ENCODE measurements at regions of chr4 and their contacts with region 1.

Region 1: DNA sequence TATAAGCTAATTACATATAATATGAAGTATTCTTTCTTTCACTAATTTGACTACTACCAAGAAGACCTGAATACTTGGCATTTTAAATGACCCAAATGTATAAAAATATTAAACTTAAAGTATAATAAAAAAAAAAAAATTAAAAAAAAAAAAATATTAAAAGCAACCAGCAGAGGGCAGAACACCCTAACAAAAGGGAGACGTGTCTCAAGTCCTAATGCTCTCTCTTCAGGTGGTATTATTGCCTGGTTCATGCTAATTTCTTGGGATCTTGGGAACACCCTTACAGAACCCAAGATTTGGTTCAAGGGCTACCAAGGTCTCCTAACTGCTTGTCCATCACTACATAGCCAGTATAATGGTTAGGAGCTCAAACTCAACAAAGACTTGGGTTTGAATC is 754.8 kb downstream of the RAB28 start:
- DNase-seq: no peak
- H3K4me3 ChIP-seq: no peak overlapping the region
- H3K27ac ChIP-seq: no peak overlapping the region
- H3K4me1 ChIP-seq: no peaks in the 10 kb centered on the region
- H3K27me3 ChIP-seq: no peaks in the 10 kb centered on the region
- CTCF ChIP-seq: peak; percentile 65

Region 2: GRCh38 chr4:11866391-11866790 is 863.0 kb before region 1 on chr4:
- CTCF ChIA-PET with region 1: no interaction called
- POLR2A ChIA-PET with region 1: no interaction called
- intact Hi-C with region 1: no loop called
- DNase-seq: no peak
- H3K4me3 ChIP-seq: no peak overlapping the region
- H3K27ac ChIP-seq: no peak overlapping the region
- H3K4me1 ChIP-seq: no peaks in the 10 kb centered on the region
- H3K27me3 ChIP-seq: no peaks in the 10 kb centered on the region
- CTCF ChIP-seq: no peak

Region 3: DNA sequence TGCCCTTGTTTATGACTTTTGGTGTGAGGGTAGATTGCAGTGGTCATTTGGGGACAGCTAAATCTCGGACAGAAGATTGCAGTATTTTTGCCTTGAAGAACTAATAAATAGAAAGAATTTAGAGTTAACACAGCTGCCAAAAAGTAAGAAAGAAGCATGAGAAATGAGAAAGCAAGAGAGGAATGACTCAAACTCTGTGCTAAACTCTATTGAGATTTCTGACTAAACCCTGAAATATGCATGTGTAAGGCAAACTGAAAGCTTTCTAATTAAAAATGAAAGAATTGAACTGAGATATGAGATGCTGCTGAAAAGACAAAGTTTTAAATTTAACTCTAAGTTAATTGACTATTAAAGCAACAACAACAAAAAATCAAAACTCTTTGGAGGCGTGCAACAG is 36.6 kb before region 1 on chr4:
- CTCF ChIA-PET with region 1: no interaction called
- POLR2A ChIA-PET with region 1: no interaction called
- intact Hi-C with region 1: no loop called
- DNase-seq: no peak
- H3K4me3 ChIP-seq: no peak overlapping the region
- H3K27ac ChIP-seq: no peak overlapping the region
- H3K4me1 ChIP-seq: no peaks in the 10 kb centered on the region
- H3K27me3 ChIP-seq: no peaks in the 10 kb centered on the region
- CTCF ChIP-seq: no peak

Region 4: GRCh38 chr4:12712648-12713339 is 16.6 kb before region 1 on chr4:
- CTCF ChIA-PET with region 1: no interaction called
- POLR2A ChIA-PET with region 1: no interaction called
- intact Hi-C with region 1: no loop called
- DNase-seq: no peak
- H3K4me3 ChIP-seq: no peak overlapping the region
- H3K27ac ChIP-seq: no peak overlapping the region
- H3K4me1 ChIP-seq: no peaks in the 10 kb centered on the region
- H3K27me3 ChIP-seq: no peaks in the 10 kb centered on the region
- CTCF ChIP-seq: no peak

Region 5: DNA sequence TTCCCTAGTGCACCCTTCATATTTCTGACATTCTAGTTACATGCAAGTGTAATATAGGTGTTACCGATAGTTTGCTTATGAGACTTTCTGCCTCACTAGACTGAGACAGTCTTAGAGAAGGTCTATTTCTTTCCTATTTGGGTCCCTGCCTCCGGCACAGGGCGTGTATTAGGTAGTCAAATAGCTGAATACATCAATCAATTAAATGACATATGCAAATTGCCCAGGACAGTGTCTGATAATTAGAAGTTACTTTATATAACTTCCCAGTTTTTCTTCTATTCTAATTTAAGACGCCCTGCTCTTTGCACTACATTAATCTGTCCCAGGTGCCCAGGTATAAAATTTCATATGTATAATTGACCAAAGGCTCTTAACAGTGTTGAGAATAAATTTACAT is 490.6 kb after region 1 on chr4:
- CTCF ChIA-PET with region 1: no interaction called
- POLR2A ChIA-PET with region 1: no interaction called
- intact Hi-C with region 1: loop called (anchors 10 kb)
- DNase-seq: no peak
- H3K4me3 ChIP-seq: no peak overlapping the region
- H3K27ac ChIP-seq: no peak overlapping the region
- H3K4me1 ChIP-seq: no peaks in the 10 kb centered on the region
- H3K27me3 ChIP-seq: no peaks in the 10 kb centered on the region
- CTCF ChIP-seq: no peak

Region 6: GRCh38 chr4:14225747-14226146 is 1496.4 kb after region 1 on chr4:
- CTCF ChIA-PET with region 1: no interaction called
- POLR2A ChIA-PET with region 1: no interaction called
- intact Hi-C with region 1: no loop called
- DNase-seq: no peak
- H3K4me3 ChIP-seq: no peak overlapping the region
- H3K27ac ChIP-seq: no peak overlapping the region
- H3K4me1 ChIP-seq: no peaks in the 10 kb centered on the region
- H3K27me3 ChIP-seq: no peaks in the 10 kb centered on the region
- CTCF ChIP-seq: no peak

Measured in PC-9 (cell line).